A549 (cell line): ENCODE measurements at regions of chr5 and their contacts with region 1.

Region 1: DNA sequence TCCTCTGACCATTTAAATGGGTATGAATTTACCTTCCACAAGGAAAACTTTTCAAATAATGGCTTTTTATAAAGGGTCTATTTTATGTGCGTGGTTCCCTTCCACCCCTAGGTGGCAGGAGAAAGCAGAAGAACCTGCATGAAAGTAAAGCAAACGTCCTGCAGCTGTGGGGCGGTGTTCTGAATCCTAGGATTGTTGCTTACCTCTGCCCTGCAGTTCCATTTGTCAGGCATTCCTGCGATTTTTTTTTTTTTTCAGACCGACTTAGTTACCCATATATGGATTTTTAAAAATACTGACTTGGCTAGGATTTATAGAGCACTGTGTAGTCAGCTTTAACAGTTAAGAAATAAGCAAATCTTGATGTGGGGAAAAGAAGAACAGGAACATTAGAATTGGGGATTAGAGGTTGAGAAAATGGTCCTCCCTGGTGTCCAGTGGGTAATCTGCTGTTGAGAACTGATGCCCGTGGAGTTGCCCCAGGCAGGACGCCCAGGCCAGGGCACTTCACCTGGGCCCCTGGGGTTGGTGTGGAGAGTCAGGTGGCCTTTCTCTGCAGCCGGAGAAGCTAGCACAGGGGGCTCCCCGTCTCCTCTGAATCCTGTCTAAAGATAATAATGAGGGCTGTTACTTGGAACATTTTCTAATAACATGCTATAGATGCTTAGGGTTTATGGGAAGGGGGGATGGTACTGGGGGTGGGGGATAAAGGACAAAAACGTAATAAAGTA is 30.4 kb upstream of the LTC4S start:
- DNase-seq: peak; percentile 76 to 80
- ATAC-seq: peak; percentile 89 to 94
- H3K4me3 ChIP-seq: no peak overlapping the region
- H3K27ac ChIP-seq: peak overlapping the region in 1 of 2 experiments; percentile 59; a peak in 2 of 6 replicates
- H3K4me1 ChIP-seq: peaks cover 42% of the 10 kb centered on the region
- CTCF ChIP-seq: peak; percentile 93
- EP300 ChIP-seq: no peak
- POLR2A ChIP-seq: no peak
- RAD21 ChIP-seq: peak; percentile 77 to 78

Region 2: GRCh38 chr5:179732417-179732917 is 30.9 kb before region 1 on chr5 and contains the start of gene MAML1:
- CTCF ChIA-PET with region 1: interaction called, 33 read pairs
- POLR2A ChIA-PET with region 1: interaction called, 10 read pairs
- DNase-seq: peak; percentile 94 to 100
- ATAC-seq: peak; percentile 95 to 97
- H3K4me3 ChIP-seq: peak within 1 kb of the TSS; percentile 69
- H3K27ac ChIP-seq: peak within 1 kb of the TSS; percentile 88 to 97
- H3K4me1 ChIP-seq: peaks cover 26% of the 10 kb centered on the region
- CTCF ChIP-seq: no peak
- EP300 ChIP-seq: no peak
- POLR2A ChIP-seq: peak; percentile 65
- RAD21 ChIP-seq: no peak
- polyA plus RNA-seq, gene MAML1: 6.9 and 10.9 TPM in 2 replicates

Region 3: GRCh38 chr5:179749857-179750508 is 13.4 kb before region 1 on chr5:
- CTCF ChIA-PET with region 1: interaction called, 48 read pairs
- POLR2A ChIA-PET with region 1: no interaction called
- DNase-seq: no peak
- ATAC-seq: peak; percentile 64 to 67; a peak in 4 of 6 replicates
- H3K4me3 ChIP-seq: no peak overlapping the region
- H3K27ac ChIP-seq: no peak overlapping the region
- H3K4me1 ChIP-seq: peaks cover 10% of the 10 kb centered on the region
- CTCF ChIP-seq: no peak
- EP300 ChIP-seq: no peak
- POLR2A ChIP-seq: no peak
- RAD21 ChIP-seq: no peak

Region 4: GRCh38 chr5:179780362-179780761 is 17.0 kb after region 1 on chr5:
- CTCF ChIA-PET with region 1: interaction called, 38 read pairs
- POLR2A ChIA-PET with region 1: no interaction called
- DNase-seq: no peak
- ATAC-seq: no peak
- H3K4me3 ChIP-seq: no peak overlapping the region
- H3K27ac ChIP-seq: no peak overlapping the region
- H3K4me1 ChIP-seq: no peaks in the 10 kb centered on the region
- CTCF ChIP-seq: no peak
- EP300 ChIP-seq: no peak
- POLR2A ChIP-seq: no peak
- RAD21 ChIP-seq: no peak

Region 5: DNA sequence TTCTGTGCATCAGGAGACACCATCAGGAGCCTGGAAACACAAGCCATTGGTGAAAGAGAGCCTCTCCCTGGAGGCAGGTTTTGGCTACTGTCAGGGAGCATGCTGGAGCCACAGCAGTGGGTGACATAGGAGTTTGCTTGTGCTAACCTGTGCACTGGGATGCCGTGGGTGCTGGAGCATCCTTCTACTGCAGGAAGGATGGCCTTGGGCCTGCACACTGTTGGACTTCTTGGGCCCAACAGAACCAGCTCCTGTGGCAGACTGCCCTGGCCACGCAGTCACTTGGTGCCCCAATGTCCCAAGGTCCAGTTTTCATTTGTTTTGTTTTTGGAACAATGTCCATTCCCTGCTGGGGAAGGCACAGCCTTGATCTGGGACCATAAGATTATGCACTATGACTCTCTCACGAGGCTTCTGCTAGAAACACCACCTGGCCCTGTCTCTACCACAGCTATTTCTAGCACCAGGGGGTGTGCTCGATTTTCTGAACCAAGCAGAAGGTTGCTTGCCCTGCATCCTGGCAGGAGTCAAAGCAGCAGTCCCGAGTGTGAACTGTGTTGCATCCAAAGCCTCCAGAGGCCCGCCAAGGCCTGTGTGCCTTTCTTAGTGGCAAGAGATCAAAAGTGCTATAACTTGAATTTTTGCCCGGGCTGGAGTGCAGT is 24.9 kb after region 1 on chr5:
- CTCF ChIA-PET with region 1: interaction called, 55 read pairs
- POLR2A ChIA-PET with region 1: no interaction called
- DNase-seq: no peak
- ATAC-seq: 0 out of 6 replicates have a peak, but pooled peaks of 1 of the 2 experiments have one; percentile 7
- H3K4me3 ChIP-seq: no peak overlapping the region
- H3K27ac ChIP-seq: no peak overlapping the region
- H3K4me1 ChIP-seq: no peaks in the 10 kb centered on the region
- CTCF ChIP-seq: no peak
- EP300 ChIP-seq: no peak
- POLR2A ChIP-seq: no peak
- RAD21 ChIP-seq: no peak

Region 6: DNA sequence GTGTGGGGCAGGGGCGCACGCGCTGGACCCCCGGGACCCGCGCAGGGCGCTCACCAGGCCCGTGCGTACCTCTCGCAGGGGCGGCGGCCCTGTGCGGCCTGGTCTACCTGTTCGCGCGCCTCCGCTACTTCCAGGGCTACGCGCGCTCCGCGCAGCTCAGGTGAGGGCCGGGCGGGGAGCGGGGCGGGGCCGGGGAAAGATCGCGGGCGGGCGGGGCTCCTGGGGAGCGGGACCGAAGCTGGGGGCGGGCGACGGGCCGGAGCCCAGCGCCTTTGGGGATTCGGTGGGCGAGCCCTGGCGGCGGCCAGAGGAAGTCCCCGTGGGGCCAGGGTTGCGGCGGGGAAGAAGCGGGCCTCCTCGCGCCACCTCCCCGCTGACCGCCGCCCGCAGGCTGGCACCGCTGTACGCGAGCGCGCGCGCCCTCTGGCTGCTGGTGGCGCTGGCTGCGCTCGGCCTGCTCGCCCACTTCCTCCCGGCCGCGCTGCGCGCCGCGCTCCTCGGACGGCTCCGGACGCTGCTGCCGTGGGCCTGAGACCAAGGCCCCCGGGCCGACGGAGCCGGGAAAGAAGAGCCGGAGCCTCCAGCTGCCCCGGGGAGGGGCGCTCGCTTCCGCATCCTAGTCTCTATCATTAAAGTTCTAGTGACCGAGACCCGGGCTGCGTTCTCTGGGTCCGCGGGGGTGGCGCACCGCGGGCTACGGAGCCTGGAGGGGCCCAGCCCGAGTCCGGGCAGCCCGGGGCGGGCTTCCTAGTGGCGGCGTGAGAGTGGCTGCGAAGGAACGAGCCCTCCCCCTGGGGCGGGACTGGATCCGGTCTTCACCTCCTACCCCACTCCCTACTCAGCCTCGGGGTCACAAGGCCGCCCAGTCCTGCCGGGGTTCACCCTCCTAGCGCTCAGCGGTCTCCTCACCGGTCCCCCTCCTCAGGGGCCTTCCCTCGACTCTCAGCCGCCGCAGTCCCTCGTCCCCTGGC is 32.8 kb after region 1 on chr5:
- CTCF ChIA-PET with region 1: interaction called, 55 read pairs
- POLR2A ChIA-PET with region 1: interaction called, 6 read pairs
- DNase-seq: peak in 1 of 2 experiments; percentile 84
- ATAC-seq: peak; percentile 63 to 83
- H3K4me3 ChIP-seq: peak overlapping the region; percentile 59
- H3K27ac ChIP-seq: peak overlapping the region; percentile 82 to 90
- H3K4me1 ChIP-seq: peaks cover 14% of the 10 kb centered on the region; the same call in 2 of the 3 replicates
- CTCF ChIP-seq: peak; percentile 89
- EP300 ChIP-seq: no peak
- POLR2A ChIP-seq: peak; percentile 28; the same call in 1 of the 2 replicates
- RAD21 ChIP-seq: peak; percentile 39 to 67; a peak in 4 of 5 replicates

Region 7: DNA sequence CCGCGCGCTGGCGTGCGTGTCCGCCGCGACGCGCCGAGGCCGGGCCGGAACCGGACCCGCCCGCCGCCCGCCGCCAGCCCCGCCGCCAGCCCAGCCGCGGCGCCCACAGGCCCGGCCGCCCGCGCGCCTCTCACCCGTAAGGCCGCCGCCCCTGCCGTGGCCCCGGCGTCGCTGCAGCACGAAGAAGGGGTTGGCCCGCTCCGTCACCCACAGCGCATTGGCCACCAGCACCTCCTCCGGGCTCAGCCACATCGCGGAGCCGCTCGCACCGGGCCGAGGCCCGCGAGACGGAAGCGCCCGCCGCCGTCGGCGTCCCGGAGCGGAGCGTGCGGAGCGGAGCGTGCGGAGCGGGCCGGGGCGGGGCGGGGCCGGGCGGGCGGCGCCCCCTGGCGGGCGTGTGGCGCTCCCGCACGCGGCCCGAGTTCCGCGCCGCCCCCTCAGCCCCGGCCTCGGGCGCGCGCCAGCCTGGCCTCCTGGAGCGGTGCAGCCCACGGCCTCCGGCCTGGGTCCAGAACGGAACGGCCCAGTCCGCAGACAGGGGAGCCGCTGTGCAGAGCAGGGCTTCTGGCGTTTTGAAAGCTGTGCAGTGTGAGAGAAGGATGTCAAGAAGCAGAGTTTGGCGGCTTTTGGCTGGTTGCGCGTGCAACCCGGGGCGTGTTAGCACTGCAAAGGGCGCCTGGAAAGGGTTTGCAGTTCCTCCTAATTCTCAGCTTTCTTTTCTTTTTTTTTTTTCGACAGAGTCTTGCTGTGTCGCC is 144.4 kb after region 1 on chr5 and contains the start of gene TBC1D9B:
- CTCF ChIA-PET with region 1: interaction called, 13 read pairs
- POLR2A ChIA-PET with region 1: no interaction called
- DNase-seq: peak; percentile 43 to 57
- ATAC-seq: peak; percentile 88 to 90
- H3K4me3 ChIP-seq: peak within 1 kb of the TSS; percentile 67
- H3K27ac ChIP-seq: peak within 1 kb of the TSS; percentile 89 to 96
- H3K4me1 ChIP-seq: peaks cover 6% of the 10 kb centered on the region; the same call in 2 of the 3 replicates
- CTCF ChIP-seq: peak; percentile 92
- EP300 ChIP-seq: no peak
- POLR2A ChIP-seq: peak; percentile 86
- RAD21 ChIP-seq: no peak
- polyA plus RNA-seq, gene TBC1D9B: 37.2 and 45.2 TPM in 2 replicates